Common myeloid progenitor, CD34-positive (primary cell): ENCODE measurements at regions of chr17 and their contacts with region 1.

Region 1: GRCh38 chr17:39283896-39284295 is 58.2 kb upstream of the STAC2 start:
- DNase-seq: no peak
- H3K4me3 ChIP-seq: no peak overlapping the region
- H3K27ac ChIP-seq: no peak overlapping the region
- H3K4me1 ChIP-seq: no peaks in the 10 kb centered on the region
- H3K27me3 ChIP-seq: no peaks in the 10 kb centered on the region

Region 2: DNA sequence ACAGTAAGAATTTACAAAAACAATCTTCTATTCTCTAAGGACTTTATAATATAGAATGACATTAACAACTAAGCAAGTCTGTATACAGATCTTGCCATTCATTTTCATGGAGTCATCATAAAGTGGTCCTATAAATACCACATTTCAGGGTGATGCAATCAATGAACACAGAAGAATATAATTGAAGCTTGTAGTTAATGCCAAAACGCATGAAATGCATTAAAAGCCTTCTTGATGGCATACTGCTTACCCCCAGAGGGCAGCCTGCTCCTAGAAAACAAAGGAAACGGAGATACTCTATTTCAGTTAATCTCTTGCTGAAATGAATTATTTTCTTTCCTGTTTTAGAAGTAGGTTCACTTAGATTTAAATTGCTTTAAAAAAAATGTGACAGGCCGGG is 13.0 kb before region 1 on chr17:
- CTCF ChIA-PET with region 1: interaction called, 10 read pairs
- POLR2A ChIA-PET with region 1: no interaction called
- DNase-seq: peak; percentile 62 to 79 (median 78)
- H3K4me3 ChIP-seq: no peak overlapping the region
- H3K27ac ChIP-seq: no peak overlapping the region
- H3K4me1 ChIP-seq: no peaks in the 10 kb centered on the region
- H3K27me3 ChIP-seq: no peaks in the 10 kb centered on the region

Region 3: DNA sequence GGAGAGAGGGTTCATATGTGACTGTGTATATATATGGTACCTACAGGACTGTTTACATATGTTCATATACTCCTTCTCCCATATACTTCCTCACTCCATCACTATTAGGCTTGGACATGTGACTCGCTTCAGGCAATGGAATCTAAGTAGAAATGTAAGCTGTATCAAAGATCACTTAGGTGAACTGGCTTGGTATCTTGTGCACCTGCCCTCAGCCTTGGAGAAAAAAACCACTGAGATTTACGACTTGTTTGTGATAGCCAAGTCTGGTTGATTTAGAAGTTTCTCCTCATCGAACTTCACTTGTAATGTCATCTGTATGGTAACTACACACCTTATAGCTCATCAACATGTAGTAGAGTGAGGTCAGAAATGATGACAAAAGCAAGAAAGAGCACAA is 57.6 kb after region 1 on chr17:
- CTCF ChIA-PET with region 1: no interaction called
- POLR2A ChIA-PET with region 1: no interaction called
- DNase-seq: no peak
- H3K4me3 ChIP-seq: no peak overlapping the region
- H3K27ac ChIP-seq: no peak overlapping the region
- H3K4me1 ChIP-seq: peaks cover 0 to 7% (median 6%) of the 10 kb centered on the region in 4 experiments
- H3K27me3 ChIP-seq: no peaks in the 10 kb centered on the region

Region 4: GRCh38 chr17:39401412-39402243 is 117.7 kb after region 1 on chr17 and contains the start of gene FBXL20:
- CTCF ChIA-PET with region 1: no interaction called
- POLR2A ChIA-PET with region 1: no interaction called
- DNase-seq: peak; percentile 90 to 95 (median 95)
- H3K4me3 ChIP-seq: peak within 1 kb of the TSS; percentile 86 to 98 (median 90)
- H3K27ac ChIP-seq: peak within 1 kb of the TSS; percentile 78 to 93
- H3K4me1 ChIP-seq: peaks cover 6 to 19% (median 12%) of the 10 kb centered on the region in 4 experiments
- H3K27me3 ChIP-seq: no peaks in the 10 kb centered on the region